ENCODE measurements at regions of chr1 and their contacts with region 1.

Region 1: GRCh38 chr1:40059338-40059959 is 18.9 kb downstream of the CAP1 start:
- DNase-seq: peak; percentile 32
- H3K4me3 Mint-ChIP-seq: peak overlapping the region; percentile 45
- H3K27ac Mint-ChIP-seq: peak overlapping the region; percentile 88
- H3K4me1 Mint-ChIP-seq: peaks cover 90% of the 10 kb centered on the region
- H3K27me3 Mint-ChIP-seq: no peaks in the 10 kb centered on the region

Region 2: DNA sequence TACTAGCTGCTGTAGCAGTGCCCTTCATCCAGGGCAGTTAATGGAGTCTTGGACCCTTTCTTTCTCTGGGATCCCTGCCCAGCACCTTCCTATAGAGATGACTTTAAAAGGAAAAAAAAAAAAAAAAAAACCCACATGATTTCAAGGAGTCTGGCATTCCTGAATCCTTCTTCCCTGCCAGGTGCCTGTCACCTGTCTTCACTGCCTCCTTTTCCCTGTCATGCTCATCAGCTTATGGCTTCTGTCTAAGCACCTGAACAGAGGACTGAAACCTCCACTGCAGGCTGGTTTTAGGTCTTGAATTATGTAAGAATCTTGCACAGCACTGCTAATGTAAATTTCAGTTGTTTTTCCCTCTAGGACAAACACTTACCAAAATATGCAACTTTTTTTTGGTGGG is 12.7 kb after region 1 on chr1:
- CTCF ChIA-PET with region 1: interaction called, 7 read pairs
- POLR2A ChIA-PET with region 1: interaction called, 13 read pairs
- DNase-seq: no peak
- H3K4me3 Mint-ChIP-seq: no peak overlapping the region
- H3K27ac Mint-ChIP-seq: no peak overlapping the region
- H3K4me1 Mint-ChIP-seq: peaks cover 8% of the 10 kb centered on the region
- H3K27me3 Mint-ChIP-seq: no peaks in the 10 kb centered on the region

Region 3: GRCh38 chr1:40078512-40079333 is 19.3 kb after region 1 on chr1:
- CTCF ChIA-PET with region 1: interaction called, 11 read pairs
- POLR2A ChIA-PET with region 1: interaction called, 6 read pairs
- DNase-seq: peak; percentile 57
- H3K4me3 Mint-ChIP-seq: no peak overlapping the region
- H3K27ac Mint-ChIP-seq: no peak overlapping the region
- H3K4me1 Mint-ChIP-seq: peaks cover 20% of the 10 kb centered on the region
- H3K27me3 Mint-ChIP-seq: no peaks in the 10 kb centered on the region